ENCODE measurements at regions of chr1 and their contacts with region 1.

Region 1: DNA sequence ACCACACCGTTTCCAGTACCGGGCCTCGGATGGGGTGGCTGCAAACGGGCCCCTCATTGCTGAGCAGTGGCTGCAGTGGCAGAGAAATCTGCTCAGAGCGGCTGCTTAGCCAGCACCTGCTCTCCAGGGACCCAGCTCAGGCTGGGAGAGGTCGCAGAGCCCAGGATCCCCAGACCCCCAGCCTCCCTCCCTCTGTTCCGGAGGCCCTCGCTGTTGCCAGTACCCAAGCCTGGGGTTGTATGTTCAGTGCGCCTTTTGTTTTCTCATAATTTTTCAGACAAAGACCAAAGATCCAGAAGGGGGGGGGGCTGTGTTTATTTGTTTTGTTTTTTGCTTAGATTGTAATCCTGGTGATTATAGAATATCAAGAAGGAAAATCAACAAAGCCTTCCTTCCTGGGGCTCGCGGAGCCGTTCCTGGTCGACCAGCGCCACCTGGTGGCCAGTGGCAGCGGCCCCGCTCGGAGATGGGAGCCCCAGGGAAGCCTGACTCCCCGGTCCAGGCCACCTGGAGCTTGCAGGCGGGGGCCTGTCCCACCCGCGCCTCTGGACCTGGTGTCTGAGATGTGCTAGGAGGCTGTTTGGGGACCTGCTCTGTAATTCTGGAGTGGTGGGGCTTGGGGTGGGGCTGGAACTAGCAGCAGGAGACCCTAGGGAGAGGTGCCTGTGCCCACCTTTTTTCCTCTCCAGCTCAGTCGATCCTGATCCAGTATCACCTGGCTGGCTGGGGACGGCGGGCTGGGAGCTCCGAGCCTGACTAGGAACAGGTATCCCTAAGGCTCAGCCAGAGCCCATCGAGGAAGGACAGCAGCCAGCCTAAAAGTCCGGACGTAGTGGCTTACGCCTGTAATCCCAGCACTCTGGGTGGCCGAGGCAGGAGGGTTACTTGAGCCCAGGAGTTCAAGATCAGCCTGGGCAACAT is 123.9 kb upstream of the VAMP3 start:
- DNase-seq: no peak
- H3K4me3 ChIP-seq: no peak overlapping the region
- H3K27ac ChIP-seq: no peak overlapping the region
- H3K4me1 ChIP-seq: peaks cover 26 to 44% (median 34%) of the 10 kb centered on the region in 4 donors
- H3K27me3 ChIP-seq: peaks cover 0 to 8% (median 0%) of the 10 kb centered on the region in 4 donors
- CTCF ChIP-seq: peak in 2 of 3 experiments; percentile 93 to 95
- EP300 ChIP-seq: no peak
- POLR2A ChIP-seq: no peak

Region 2: DNA sequence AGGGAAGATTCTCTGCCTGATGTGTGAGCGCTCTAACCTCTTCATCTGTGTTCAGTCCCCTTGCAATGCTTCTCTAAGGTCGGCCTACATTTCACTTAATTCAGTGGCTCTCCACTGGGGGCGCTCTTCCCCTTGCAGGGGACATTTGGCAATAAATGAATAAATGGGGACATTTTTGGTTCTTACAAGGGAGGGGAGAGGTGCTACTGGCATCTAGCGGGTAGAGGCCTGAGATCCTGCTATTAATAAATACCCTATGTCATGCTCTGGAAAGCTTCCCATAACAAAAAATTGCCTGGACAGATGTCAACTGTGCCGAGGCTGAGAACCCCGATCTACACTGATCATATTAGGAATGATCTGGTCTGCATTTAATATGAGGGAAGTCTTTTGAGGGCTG is 919.7 kb before region 1 on chr1:
- intact Hi-C with region 1: loop called (anchors 10 kb)
- DNase-seq: no peak
- H3K4me3 ChIP-seq: no peak overlapping the region
- H3K27ac ChIP-seq: no peak overlapping the region
- H3K4me1 ChIP-seq: peaks cover 0 to 28% (median 17%) of the 10 kb centered on the region in 4 donors
- H3K27me3 ChIP-seq: no peaks in the 10 kb centered on the region
- CTCF ChIP-seq: peak; percentile 73 to 90 (median 75)
- EP300 ChIP-seq: no peak
- POLR2A ChIP-seq: no peak

Region 3: GRCh38 chr1:6784560-6785317 is 862.5 kb before region 1 on chr1:
- intact Hi-C with region 1: loop called (anchors 10 kb)
- DNase-seq: peak; percentile 100
- H3K4me3 ChIP-seq: peak overlapping the region; percentile 73 to 90 (median 88)
- H3K27ac ChIP-seq: peak overlapping the region; percentile 95 to 100 (median 98)
- H3K4me1 ChIP-seq: peaks cover 20 to 51% (median 46%) of the 10 kb centered on the region in 4 donors
- H3K27me3 ChIP-seq: no peaks in the 10 kb centered on the region
- CTCF ChIP-seq: no peak
- EP300 ChIP-seq: no peak
- POLR2A ChIP-seq: peak; percentile 94

Region 4: DNA sequence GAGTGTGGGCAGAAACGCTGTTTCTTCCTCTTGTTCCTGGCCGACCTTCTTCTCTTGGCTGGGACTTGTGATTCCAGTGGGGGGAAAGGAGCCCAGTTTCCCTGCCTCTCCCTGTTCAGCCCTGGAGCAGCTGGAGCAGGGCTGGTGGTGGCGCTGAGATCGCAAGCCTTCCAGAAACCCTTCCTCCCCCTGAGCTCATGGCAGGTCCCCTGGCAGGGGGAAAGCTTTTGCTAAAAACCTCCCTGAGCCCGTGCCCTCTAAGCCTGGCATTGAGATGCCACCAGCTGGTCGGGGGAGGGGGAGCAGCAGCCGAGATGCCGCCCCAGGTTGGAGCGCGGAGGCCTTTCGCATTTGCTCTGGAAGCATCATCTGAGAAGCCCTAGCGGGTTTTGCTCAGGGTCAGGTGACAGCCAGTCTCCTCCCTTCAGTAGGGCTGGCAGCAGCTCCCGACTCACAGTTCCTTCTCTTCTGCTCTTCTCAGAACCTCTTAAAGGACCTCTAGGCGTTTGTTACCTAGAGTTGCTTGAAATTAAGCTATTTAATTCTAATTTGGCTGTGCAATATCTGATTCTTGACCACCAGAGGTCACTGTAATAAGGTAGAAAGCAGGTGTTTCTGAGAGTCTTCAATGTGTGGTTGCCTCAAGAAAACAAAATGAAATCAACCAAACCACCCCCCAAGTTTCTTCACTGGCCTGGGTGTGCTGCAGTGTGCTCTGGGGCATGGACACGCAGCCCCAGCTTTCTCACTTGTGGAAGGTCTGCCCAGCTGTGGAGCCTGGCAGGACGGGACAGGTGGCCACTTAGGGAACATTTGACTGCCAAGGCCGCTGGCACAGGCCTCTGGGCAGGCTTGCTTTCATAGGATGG is 604.7 kb before region 1 on chr1:
- intact Hi-C with region 1: loop called (anchors 5 kb)
- DNase-seq: no peak
- H3K4me3 ChIP-seq: no peak overlapping the region
- H3K27ac ChIP-seq: no peak overlapping the region
- H3K4me1 ChIP-seq: no peaks in the 10 kb centered on the region
- H3K27me3 ChIP-seq: peaks cover 0 to 51% (median 0%) of the 10 kb centered on the region in 4 donors
- CTCF ChIP-seq: peak; percentile 43 to 53 (median 50)
- EP300 ChIP-seq: no peak
- POLR2A ChIP-seq: no peak

Region 5: GRCh38 chr1:7070389-7071029 is 576.7 kb before region 1 on chr1:
- intact Hi-C with region 1: loop called (anchors 10 kb)
- DNase-seq: no peak
- H3K4me3 ChIP-seq: peak overlapping the region; percentile 43 to 53 (median 46)
- H3K27ac ChIP-seq: no peak overlapping the region
- H3K4me1 ChIP-seq: peaks cover 5 to 13% (median 9%) of the 10 kb centered on the region in 4 donors
- H3K27me3 ChIP-seq: peaks cover 0 to 14% (median 0%) of the 10 kb centered on the region in 4 donors
- CTCF ChIP-seq: peak; percentile 66 to 84 (median 82)
- EP300 ChIP-seq: no peak
- POLR2A ChIP-seq: no peak

Region 6: DNA sequence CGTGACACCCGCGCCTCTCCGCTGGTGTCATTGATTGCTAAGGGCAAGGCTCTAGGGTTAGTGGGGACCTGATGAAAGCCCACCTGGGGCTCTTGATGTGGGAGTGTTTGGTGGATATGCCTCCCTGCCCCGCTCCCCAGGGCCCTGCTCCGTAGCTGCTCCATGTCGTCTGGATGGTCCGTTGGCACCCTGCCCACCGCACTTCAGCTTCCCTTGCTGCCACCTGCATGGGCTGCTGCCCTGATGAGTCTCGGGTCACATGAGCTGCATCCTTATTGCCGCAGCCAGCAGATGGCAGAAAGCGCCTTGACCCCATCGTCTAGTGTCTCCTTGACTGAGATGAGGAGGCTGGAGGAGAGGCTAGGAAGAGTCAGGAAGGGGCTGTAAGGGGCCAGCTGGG is 422.6 kb before region 1 on chr1:
- intact Hi-C with region 1: loop called (anchors 10 kb)
- DNase-seq: peak; percentile 78
- H3K4me3 ChIP-seq: no peak overlapping the region
- H3K27ac ChIP-seq: no peak overlapping the region
- H3K4me1 ChIP-seq: no peaks in the 10 kb centered on the region
- H3K27me3 ChIP-seq: peaks cover 0 to 11% (median 0%) of the 10 kb centered on the region in 4 donors
- CTCF ChIP-seq: peak in 1 of 3 experiments; percentile 12
- EP300 ChIP-seq: no peak
- POLR2A ChIP-seq: no peak

Region 7: DNA sequence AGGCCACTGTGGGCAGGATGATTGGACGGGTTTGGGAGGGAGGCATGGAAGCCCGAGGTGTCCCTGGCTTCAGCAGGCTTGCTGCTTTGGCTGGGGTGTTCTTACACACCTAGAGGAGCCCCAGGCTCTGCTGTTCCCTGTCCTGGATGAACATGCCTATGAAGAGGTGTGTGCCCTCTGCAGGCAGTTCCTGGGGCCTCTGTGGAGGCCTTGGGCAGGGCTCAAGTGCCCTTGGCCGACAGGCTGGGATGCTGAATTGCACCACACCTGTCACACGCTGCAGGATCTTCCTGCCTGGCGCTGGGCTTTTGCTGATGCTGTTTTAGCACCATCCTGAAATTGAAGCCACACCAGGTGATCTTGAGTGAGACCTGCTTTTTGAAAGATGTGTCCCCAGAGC is 291.2 kb before region 1 on chr1:
- intact Hi-C with region 1: no loop called
- DNase-seq: no peak
- H3K4me3 ChIP-seq: no peak overlapping the region
- H3K27ac ChIP-seq: no peak overlapping the region
- H3K4me1 ChIP-seq: no peaks in the 10 kb centered on the region
- H3K27me3 ChIP-seq: peaks cover 0 to 8% (median 0%) of the 10 kb centered on the region in 4 donors
- CTCF ChIP-seq: no peak
- EP300 ChIP-seq: no peak
- POLR2A ChIP-seq: no peak

Region 8: GRCh38 chr1:7491109-7491817 is 156.0 kb before region 1 on chr1:
- intact Hi-C with region 1: no loop called
- DNase-seq: no peak
- H3K4me3 ChIP-seq: peak overlapping the region in 3 of 4 donors; percentile 0 to 26 (median 16)
- H3K27ac ChIP-seq: peak overlapping the region; percentile 5 to 65 (median 32)
- H3K4me1 ChIP-seq: peaks cover 6 to 20% (median 19%) of the 10 kb centered on the region in 4 donors
- H3K27me3 ChIP-seq: no peaks in the 10 kb centered on the region
- CTCF ChIP-seq: no peak
- EP300 ChIP-seq: no peak
- POLR2A ChIP-seq: no peak

Measured in esophagus muscularis mucosa (tissue), 4 donors.